ENCODE measurements at regions of chr22 and their contacts with region 1.

Region 1: GRCh38 chr22:49657275-49657975 is 170.2 kb downstream of the BRD1 start:
- DNase-seq: peak; percentile 42 to 92 (median 72)
- ATAC-seq: peak; percentile 87
- H3K4me3 ChIP-seq: peak overlapping the region; percentile 66 to 93
- H3K4me3 Mint-ChIP-seq: peak overlapping the region; percentile 92
- H3K27ac ChIP-seq: peak overlapping the region in 1 of 2 experiments; percentile 73
- H3K27ac Mint-ChIP-seq: peak overlapping the region; percentile 85
- H3K4me1 ChIP-seq: peaks cover 28% of the 10 kb centered on the region
- H3K4me1 Mint-ChIP-seq: peaks cover 30% of the 10 kb centered on the region
- H3K27me3 ChIP-seq: no peaks in the 10 kb centered on the region
- H3K27me3 Mint-ChIP-seq: no peaks in the 10 kb centered on the region
- CTCF ChIP-seq: no peak

Region 2: GRCh38 chr22:49514641-49515040 is 142.8 kb before region 1 on chr22:
- CTCF ChIA-PET with region 1: no interaction called
- POLR2A ChIA-PET with region 1: no interaction called
- intact Hi-C with region 1: loop called in 1 of 2 experiments (anchors 5 kb)
- DNase-seq: no peak
- ATAC-seq: no peak
- H3K4me3 ChIP-seq: no peak overlapping the region
- H3K4me3 Mint-ChIP-seq: no peak overlapping the region
- H3K27ac ChIP-seq: no peak overlapping the region
- H3K27ac Mint-ChIP-seq: no peak overlapping the region
- H3K4me1 ChIP-seq: peaks cover 7% of the 10 kb centered on the region
- H3K4me1 Mint-ChIP-seq: peaks cover 11% of the 10 kb centered on the region
- H3K27me3 ChIP-seq: no peaks in the 10 kb centered on the region
- H3K27me3 Mint-ChIP-seq: peaks cover 7% of the 10 kb centered on the region
- CTCF ChIP-seq: no peak

Region 3: DNA sequence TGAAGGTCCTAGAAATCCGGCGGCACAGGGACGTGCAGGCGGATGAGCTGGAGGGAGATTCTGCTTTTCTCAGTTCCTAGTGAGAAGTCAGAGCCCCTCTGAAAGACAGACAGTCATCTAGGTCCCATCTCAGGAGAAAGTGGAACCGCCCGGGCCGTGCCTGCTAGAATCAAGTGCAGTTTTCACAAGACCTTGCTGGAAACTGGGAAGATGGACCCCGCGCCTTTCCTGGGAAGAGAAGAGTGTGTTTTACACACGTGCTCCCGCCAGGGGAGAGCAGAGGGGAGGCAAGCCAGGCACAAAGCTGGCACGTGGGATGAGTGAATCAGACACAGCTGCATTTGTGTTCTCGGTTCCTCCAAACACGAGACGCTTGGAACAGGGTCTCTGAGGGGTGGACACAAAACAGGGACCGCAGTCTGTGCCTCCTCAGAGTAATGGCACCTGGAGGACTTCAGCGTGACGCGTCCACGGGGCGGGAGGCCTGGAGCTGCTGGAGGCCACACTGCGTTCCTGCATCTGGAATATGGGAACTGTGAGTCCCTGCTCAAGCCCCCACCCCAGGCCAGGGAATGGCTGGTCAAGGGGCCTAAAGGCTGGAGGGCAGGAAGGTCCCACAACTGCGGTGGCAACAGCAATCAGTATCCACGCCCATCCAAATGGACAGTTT is 48.1 kb before region 1 on chr22:
- CTCF ChIA-PET with region 1: no interaction called
- POLR2A ChIA-PET with region 1: no interaction called
- intact Hi-C with region 1: no loop called
- DNase-seq: no peak
- ATAC-seq: no peak
- H3K4me3 ChIP-seq: no peak overlapping the region
- H3K4me3 Mint-ChIP-seq: no peak overlapping the region
- H3K27ac ChIP-seq: no peak overlapping the region
- H3K27ac Mint-ChIP-seq: no peak overlapping the region
- H3K4me1 ChIP-seq: no peaks in the 10 kb centered on the region
- H3K4me1 Mint-ChIP-seq: no peaks in the 10 kb centered on the region
- H3K27me3 ChIP-seq: no peaks in the 10 kb centered on the region
- H3K27me3 Mint-ChIP-seq: no peaks in the 10 kb centered on the region
- CTCF ChIP-seq: no peak

Region 4: DNA sequence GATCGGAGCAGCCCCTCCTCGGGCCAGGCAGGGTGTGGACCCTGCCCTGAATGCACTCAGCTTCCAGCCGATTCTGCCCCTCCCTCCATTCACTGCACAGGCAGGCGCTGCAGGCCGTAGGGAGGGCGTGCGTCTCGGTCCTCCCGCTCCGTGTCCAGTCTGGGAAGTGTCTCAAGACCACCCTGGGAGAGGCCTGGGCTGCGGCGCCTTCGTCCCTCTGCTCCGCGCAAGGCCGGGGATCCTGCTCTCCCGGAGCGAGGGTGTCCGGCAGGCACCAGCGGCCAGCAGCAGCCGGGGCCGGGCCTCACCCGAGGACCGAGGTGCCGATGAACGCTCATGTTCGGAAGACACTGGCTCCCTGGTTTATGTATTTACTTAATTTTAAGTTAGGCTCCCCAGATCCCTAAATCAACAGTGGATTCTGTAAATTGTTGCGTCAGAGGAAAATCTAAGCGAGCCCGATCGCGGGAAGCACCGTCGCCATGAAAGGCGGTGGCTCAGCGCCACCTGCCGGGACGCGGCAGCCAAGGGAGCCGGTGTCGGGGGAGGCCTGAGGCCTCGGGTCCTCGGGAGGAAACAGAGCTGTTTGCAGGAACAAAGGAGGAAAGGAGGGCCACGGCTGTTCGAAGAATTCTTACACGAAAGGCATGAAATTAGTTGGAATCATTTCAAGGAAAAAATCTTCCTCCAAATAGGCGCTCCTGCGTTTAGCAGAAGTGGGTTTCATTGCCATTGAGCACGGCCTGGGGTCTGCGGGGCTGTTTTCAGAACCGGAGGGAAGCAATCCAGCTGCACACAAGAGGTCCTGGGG is 25.0 kb before region 1 on chr22:
- CTCF ChIA-PET with region 1: no interaction called
- POLR2A ChIA-PET with region 1: no interaction called
- intact Hi-C with region 1: no loop called
- DNase-seq: no peak
- ATAC-seq: no peak
- H3K4me3 ChIP-seq: no peak overlapping the region
- H3K4me3 Mint-ChIP-seq: no peak overlapping the region
- H3K27ac ChIP-seq: no peak overlapping the region
- H3K27ac Mint-ChIP-seq: no peak overlapping the region
- H3K4me1 ChIP-seq: no peaks in the 10 kb centered on the region
- H3K4me1 Mint-ChIP-seq: peaks cover 4% of the 10 kb centered on the region
- H3K27me3 ChIP-seq: no peaks in the 10 kb centered on the region
- H3K27me3 Mint-ChIP-seq: no peaks in the 10 kb centered on the region
- CTCF ChIP-seq: peak; percentile 23

Region 5: DNA sequence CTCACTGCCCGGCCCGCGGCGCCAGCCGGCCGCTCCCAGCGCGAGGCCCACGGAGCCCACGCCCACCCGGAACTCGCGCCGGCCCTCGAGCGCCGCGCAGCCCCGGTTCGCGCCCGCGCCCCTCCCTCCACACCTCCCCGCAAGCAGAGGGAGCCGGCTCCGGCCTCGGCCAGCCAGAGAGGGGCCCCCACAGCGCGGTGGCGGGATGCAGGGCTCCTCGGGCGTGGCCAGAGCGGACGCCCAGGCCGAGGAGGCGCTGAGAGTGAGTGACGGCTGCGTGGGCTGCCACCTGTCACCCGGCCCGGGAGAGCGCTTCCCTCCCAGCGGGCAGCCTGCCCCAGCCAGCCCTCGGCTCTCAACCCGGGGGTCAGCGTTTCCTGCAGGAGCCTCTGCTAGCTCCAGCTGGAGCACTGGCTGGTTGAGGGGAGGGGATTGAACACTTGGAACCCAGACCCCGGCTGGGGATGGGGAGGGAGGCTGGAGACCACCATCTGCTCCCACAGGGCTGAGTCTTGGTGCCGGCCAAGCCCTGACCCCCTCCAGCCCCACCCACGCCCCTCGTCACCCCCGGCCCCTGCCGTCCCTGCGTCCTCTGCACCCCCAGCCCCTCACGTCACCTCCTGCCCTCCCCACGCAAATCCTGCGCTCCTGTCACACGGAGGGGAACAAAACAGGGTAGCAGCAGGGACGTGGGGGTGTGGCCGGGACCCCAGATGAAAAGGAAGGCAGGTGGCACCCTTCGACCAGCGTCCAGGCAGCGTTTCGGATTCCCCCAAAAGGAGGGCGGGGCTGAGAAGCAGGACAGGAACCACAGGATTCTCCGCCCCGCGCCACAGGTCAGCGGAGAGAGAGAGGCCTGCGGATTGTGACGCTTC is 13.3 kb after region 1 on chr22:
- CTCF ChIA-PET with region 1: no interaction called
- POLR2A ChIA-PET with region 1: interaction called, 4 read pairs
- intact Hi-C with region 1: loop called in 1 of 2 experiments (anchors 2 kb)
- DNase-seq: peak in 4 of 9 experiments; percentile 19 to 61 (median 39)
- ATAC-seq: peak; percentile 45
- H3K4me3 ChIP-seq: peak overlapping the region; percentile 42 to 48
- H3K4me3 Mint-ChIP-seq: peak overlapping the region; percentile 78
- H3K27ac ChIP-seq: no peak overlapping the region
- H3K27ac Mint-ChIP-seq: peak overlapping the region; percentile 4
- H3K4me1 ChIP-seq: peaks cover 18% of the 10 kb centered on the region
- H3K4me1 Mint-ChIP-seq: peaks cover 36% of the 10 kb centered on the region
- H3K27me3 ChIP-seq: peaks cover 0 to 9% of the 10 kb centered on the region in 2 experiments
- H3K27me3 Mint-ChIP-seq: peaks cover 25% of the 10 kb centered on the region
- CTCF ChIP-seq: no peak

Region 6: GRCh38 chr22:50101870-50102565 is 444.6 kb after region 1 on chr22:
- CTCF ChIA-PET with region 1: no interaction called
- POLR2A ChIA-PET with region 1: no interaction called
- intact Hi-C with region 1: no loop called
- DNase-seq: no peak
- ATAC-seq: no peak
- H3K4me3 ChIP-seq: no peak overlapping the region
- H3K4me3 Mint-ChIP-seq: no peak overlapping the region
- H3K27ac ChIP-seq: no peak overlapping the region
- H3K27ac Mint-ChIP-seq: no peak overlapping the region
- H3K4me1 ChIP-seq: peaks cover 9% of the 10 kb centered on the region
- H3K4me1 Mint-ChIP-seq: peaks cover 6% of the 10 kb centered on the region
- H3K27me3 ChIP-seq: no peaks in the 10 kb centered on the region
- H3K27me3 Mint-ChIP-seq: peaks cover 10% of the 10 kb centered on the region
- CTCF ChIP-seq: no peak

Measured in CD8-positive, alpha-beta T cell (primary cell).